CD8-positive, alpha-beta T cell (primary cell): ENCODE measurements at regions of chr19 and their contacts with region 1.

Region 1: GRCh38 chr19:44212250-44212865 is at the start of gene ZNF227:
- DNase-seq: peak; percentile 52 to 88 (median 81)
- ATAC-seq: peak; percentile 96
- H3K4me3 ChIP-seq: peak within 1 kb of the TSS; percentile 79 to 94
- H3K4me3 Mint-ChIP-seq: peak within 1 kb of the TSS; percentile 95
- H3K27ac ChIP-seq: peak within 1 kb of the TSS; percentile 75 to 81
- H3K27ac Mint-ChIP-seq: peak within 1 kb of the TSS; percentile 95
- H3K4me1 ChIP-seq: peaks cover 18% of the 10 kb centered on the region
- H3K4me1 Mint-ChIP-seq: peaks cover 32% of the 10 kb centered on the region
- H3K27me3 ChIP-seq: no peaks in the 10 kb centered on the region
- H3K27me3 Mint-ChIP-seq: no peaks in the 10 kb centered on the region
- CTCF ChIP-seq: no peak
- total RNA-seq, gene ZNF227: 22.6 to 23.0 TPM

Region 2: GRCh38 chr19:43438291-43439096 is 773.9 kb before region 1 on chr19:
- CTCF ChIA-PET with region 1: no interaction called
- POLR2A ChIA-PET with region 1: no interaction called
- intact Hi-C with region 1: no loop called
- DNase-seq: peak in 3 of 9 experiments; percentile 16 to 33 (median 22)
- ATAC-seq: peak; percentile 25
- H3K4me3 ChIP-seq: peak overlapping the region in 1 of 2 experiments; percentile 10
- H3K4me3 Mint-ChIP-seq: peak overlapping the region; percentile 44
- H3K27ac ChIP-seq: peak overlapping the region; percentile 64 to 88
- H3K27ac Mint-ChIP-seq: peak overlapping the region; percentile 96
- H3K4me1 ChIP-seq: peaks cover 33% of the 10 kb centered on the region
- H3K4me1 Mint-ChIP-seq: peaks cover 56% of the 10 kb centered on the region
- H3K27me3 ChIP-seq: no peaks in the 10 kb centered on the region
- H3K27me3 Mint-ChIP-seq: no peaks in the 10 kb centered on the region
- CTCF ChIP-seq: no peak

Region 3: DNA sequence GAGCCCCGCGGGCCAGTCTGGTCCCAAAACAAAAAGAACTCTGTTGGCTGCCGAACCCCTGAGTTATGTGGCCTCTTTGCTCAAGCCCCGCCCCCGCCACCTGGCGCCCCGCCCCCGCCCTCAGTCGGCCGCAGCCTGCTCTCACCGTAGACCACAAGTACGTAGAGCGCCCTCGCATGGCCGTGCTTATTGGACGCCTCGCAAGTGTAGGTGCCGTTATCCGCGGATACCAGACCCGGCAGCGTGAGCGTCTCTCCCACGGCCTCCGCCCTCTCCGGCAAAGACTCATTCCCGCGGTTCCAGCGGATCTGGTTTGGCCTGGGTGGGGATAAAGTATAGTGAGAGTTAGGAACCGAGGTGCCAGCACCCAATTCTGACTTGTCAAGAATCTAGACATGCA is 587.4 kb before region 1 on chr19:
- CTCF ChIA-PET with region 1: no interaction called
- POLR2A ChIA-PET with region 1: no interaction called
- intact Hi-C with region 1: loop called in 1 of 2 experiments (anchors 5 kb)
- DNase-seq: peak; percentile 68 to 93 (median 84)
- ATAC-seq: peak; percentile 89
- H3K4me3 ChIP-seq: no peak overlapping the region
- H3K4me3 Mint-ChIP-seq: no peak overlapping the region
- H3K27ac ChIP-seq: no peak overlapping the region
- H3K27ac Mint-ChIP-seq: no peak overlapping the region
- H3K4me1 ChIP-seq: peaks cover 21% of the 10 kb centered on the region
- H3K4me1 Mint-ChIP-seq: peaks cover 20% of the 10 kb centered on the region
- H3K27me3 ChIP-seq: peaks cover 3 to 4% of the 10 kb centered on the region in 2 experiments
- H3K27me3 Mint-ChIP-seq: peaks cover 9% of the 10 kb centered on the region
- CTCF ChIP-seq: peak; percentile 51

Region 4: DNA sequence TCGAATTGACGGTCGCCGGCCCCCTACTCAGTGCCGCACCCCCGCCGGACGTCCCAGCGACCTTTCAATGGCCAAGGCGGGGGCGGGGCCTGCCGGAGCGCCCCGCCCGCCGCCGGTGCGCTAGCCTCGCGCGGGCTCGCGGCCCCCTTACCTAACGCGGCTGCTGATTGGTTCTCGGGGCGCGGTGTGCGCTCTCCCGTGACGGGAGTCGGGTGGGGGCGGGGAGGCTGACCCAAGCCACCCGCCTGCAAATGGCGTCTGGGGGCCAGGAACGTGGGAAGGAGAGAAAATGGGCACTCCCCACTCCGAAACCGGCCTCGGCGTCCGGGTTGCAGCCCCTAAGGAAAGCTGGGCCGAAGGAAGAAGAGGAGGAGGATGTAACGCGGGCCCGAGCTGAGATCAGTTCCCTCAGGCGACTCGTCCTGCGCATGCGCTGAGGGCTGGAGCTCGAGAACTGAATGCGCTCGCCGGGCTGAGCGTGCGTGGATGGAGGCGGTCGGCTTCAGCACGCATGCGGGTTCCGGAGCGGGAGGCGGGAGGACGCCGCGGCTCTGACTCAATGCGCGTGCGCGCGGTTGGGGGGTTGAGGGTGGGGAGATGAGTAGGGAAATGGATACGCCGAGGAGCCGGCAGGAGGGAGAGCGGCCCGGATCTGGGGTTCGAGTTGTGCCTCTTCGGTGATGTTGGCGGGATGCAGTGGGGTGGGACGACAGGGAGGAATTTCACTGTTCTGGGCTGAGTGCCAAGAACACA is 457.7 kb before region 1 on chr19 and contains the start of gene SMG9:
- CTCF ChIA-PET with region 1: no interaction called
- POLR2A ChIA-PET with region 1: no interaction called
- intact Hi-C with region 1: no loop called
- DNase-seq: peak; percentile 95 to 99 (median 99)
- ATAC-seq: peak; percentile 80
- H3K4me3 ChIP-seq: peak within 1 kb of the TSS; percentile 71 to 72
- H3K4me3 Mint-ChIP-seq: peak within 1 kb of the TSS; percentile 92
- H3K27ac ChIP-seq: peak within 1 kb of the TSS; percentile 85 to 97
- H3K27ac Mint-ChIP-seq: peak within 1 kb of the TSS; percentile 98
- H3K4me1 ChIP-seq: peaks cover 21% of the 10 kb centered on the region
- H3K4me1 Mint-ChIP-seq: peaks cover 46% of the 10 kb centered on the region
- H3K27me3 ChIP-seq: no peaks in the 10 kb centered on the region
- H3K27me3 Mint-ChIP-seq: no peaks in the 10 kb centered on the region
- CTCF ChIP-seq: no peak
- total RNA-seq, gene SMG9: 32.2 to 34.3 TPM

Region 5: DNA sequence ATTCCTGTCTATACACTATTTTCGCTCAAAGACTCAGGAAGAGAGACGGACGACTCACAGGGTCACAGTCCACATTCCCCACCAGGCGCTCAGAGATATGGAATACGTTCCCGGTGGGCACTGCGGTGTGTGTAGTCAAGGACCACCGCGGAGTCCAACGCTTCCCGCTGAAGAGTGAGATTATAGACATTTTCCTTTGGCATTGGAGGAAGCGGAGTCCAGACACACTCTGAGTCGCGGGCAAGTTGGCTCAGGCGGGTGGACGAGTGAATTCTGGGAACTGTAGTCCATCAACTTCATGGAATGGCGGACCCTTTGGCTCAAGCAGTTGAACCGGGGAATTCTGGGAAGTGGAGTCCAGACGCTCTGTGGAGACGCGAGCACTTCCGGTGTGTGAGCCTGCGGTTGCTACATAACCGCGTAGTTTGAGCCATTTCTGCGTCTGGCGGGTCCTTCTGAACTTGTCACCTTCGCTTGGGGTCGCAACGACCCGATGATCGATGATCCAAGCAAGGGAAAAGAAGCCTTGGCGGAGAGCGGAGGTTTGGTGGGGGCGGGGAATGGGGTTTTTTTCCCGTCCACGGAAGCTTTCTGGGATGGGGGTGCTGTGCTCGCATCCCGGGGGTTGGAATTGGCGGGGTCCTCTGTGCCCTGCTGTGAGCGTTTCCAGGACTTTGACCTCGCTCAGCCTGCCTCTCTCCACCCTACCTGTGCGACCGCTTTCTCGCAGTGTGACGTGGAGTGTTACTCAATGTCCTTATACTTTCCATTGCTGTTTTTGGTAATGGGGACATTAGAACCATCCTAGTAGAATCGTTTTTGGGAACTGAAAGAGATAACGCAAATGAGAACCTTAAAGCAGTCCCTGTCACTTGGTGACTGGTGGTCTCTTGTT is 209.5 kb before region 1 on chr19 and contains the start of gene ZNF230:
- CTCF ChIA-PET with region 1: no interaction called
- POLR2A ChIA-PET with region 1: no interaction called
- intact Hi-C with region 1: loop called (anchors 1 to 2 kb)
- DNase-seq: peak; percentile 64 to 96 (median 82)
- ATAC-seq: peak; percentile 96
- H3K4me3 ChIP-seq: peak within 1 kb of the TSS; percentile 91 to 92
- H3K4me3 Mint-ChIP-seq: peak within 1 kb of the TSS; percentile 99
- H3K27ac ChIP-seq: peak within 1 kb of the TSS; percentile 59 to 81
- H3K27ac Mint-ChIP-seq: peak within 1 kb of the TSS; percentile 98
- H3K4me1 ChIP-seq: peaks cover 12% of the 10 kb centered on the region
- H3K4me1 Mint-ChIP-seq: peaks cover 23% of the 10 kb centered on the region
- H3K27me3 ChIP-seq: no peaks in the 10 kb centered on the region
- H3K27me3 Mint-ChIP-seq: no peaks in the 10 kb centered on the region
- CTCF ChIP-seq: no peak
- total RNA-seq, gene ZNF230: 2.4 to 3.8 TPM

Region 6: GRCh38 chr19:44071824-44072542 is 140.4 kb before region 1 on chr19 and contains the start of gene ZNF284:
- CTCF ChIA-PET with region 1: no interaction called
- POLR2A ChIA-PET with region 1: no interaction called
- intact Hi-C with region 1: loop called (anchors 1 kb)
- DNase-seq: peak; percentile 60 to 93 (median 83)
- ATAC-seq: peak; percentile 99
- H3K4me3 ChIP-seq: peak within 1 kb of the TSS; percentile 65 to 73
- H3K4me3 Mint-ChIP-seq: peak within 1 kb of the TSS; percentile 91
- H3K27ac ChIP-seq: peak within 1 kb of the TSS; percentile 2 to 59
- H3K27ac Mint-ChIP-seq: peak within 1 kb of the TSS; percentile 79
- H3K4me1 ChIP-seq: peaks cover 16% of the 10 kb centered on the region
- H3K4me1 Mint-ChIP-seq: peaks cover 36% of the 10 kb centered on the region
- H3K27me3 ChIP-seq: no peaks in the 10 kb centered on the region
- H3K27me3 Mint-ChIP-seq: no peaks in the 10 kb centered on the region
- CTCF ChIP-seq: no peak
- total RNA-seq, gene ZNF284: 0.64 to 1.2 TPM

Region 7: DNA sequence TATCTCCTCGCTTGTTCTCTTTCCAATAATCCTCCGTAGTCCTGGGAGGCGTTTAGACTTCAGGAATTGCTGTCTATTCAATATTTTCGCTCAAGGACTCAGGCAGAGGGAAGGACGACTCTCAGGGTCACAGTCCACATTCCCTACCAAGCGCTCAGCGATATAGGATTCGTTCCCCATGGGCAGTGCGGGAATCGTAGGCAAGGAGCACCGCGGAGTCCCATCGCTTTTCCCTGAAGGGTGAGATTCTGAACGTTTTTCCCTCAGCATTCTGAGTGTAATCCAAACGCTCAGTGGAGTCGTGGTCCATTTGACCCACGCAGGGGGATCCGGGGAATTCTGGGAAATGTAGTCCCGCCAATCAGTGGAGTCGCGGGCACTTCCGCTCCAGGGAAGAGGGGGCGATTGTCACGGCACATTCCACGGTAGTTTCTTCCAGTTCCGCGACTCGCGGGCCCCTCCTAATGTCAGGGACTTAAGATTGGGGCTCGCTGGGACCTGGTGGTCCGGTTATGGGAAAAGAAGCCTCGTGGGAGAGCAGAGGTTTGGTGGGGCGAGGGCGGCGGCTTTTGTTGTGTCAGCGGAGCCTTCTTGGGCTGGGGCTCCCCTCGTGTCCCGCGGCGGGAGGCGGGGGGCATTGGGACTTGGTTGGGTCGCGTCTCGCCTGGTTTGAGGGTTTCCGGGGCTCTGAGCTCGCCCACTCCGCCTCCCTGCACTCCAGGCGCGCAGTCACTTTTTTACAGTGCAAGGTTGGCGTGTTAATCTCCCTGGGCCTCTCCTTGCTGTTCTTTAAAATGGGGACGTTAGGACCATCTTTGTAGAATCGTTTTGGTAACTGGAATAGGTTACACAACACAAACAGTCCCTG is 70.9 kb before region 1 on chr19 and contains the start of gene ZNF234:
- CTCF ChIA-PET with region 1: no interaction called
- POLR2A ChIA-PET with region 1: interaction called, 5 read pairs
- intact Hi-C with region 1: loop called (anchors 1 to 2 kb)
- DNase-seq: peak; percentile 22 to 86 (median 68)
- ATAC-seq: peak; percentile 93
- H3K4me3 ChIP-seq: peak within 1 kb of the TSS; percentile 77 to 82
- H3K4me3 Mint-ChIP-seq: peak within 1 kb of the TSS; percentile 96
- H3K27ac ChIP-seq: peak within 1 kb of the TSS; percentile 34 to 76
- H3K27ac Mint-ChIP-seq: peak within 1 kb of the TSS; percentile 85
- H3K4me1 ChIP-seq: peaks cover 17% of the 10 kb centered on the region
- H3K4me1 Mint-ChIP-seq: peaks cover 25% of the 10 kb centered on the region
- H3K27me3 ChIP-seq: no peaks in the 10 kb centered on the region
- H3K27me3 Mint-ChIP-seq: no peaks in the 10 kb centered on the region
- CTCF ChIP-seq: no peak
- total RNA-seq, gene ZNF234: 2.2 to 2.4 TPM

Region 8: GRCh38 chr19:44304659-44305193 is 92.4 kb after region 1 on chr19 and contains the start of gene ZNF235:
- CTCF ChIA-PET with region 1: interaction called, 3 read pairs
- POLR2A ChIA-PET with region 1: interaction called, 5 read pairs
- intact Hi-C with region 1: loop called (anchors 1 to 2 kb)
- DNase-seq: peak; percentile 22 to 89 (median 70)
- ATAC-seq: peak; percentile 96
- H3K4me3 ChIP-seq: peak within 1 kb of the TSS; percentile 75 to 77
- H3K4me3 Mint-ChIP-seq: peak within 1 kb of the TSS; percentile 94
- H3K27ac ChIP-seq: peak within 1 kb of the TSS; percentile 26 to 52
- H3K27ac Mint-ChIP-seq: peak within 1 kb of the TSS; percentile 85
- H3K4me1 ChIP-seq: peaks cover 15% of the 10 kb centered on the region
- H3K4me1 Mint-ChIP-seq: peaks cover 35% of the 10 kb centered on the region
- H3K27me3 ChIP-seq: no peaks in the 10 kb centered on the region
- H3K27me3 Mint-ChIP-seq: peaks cover 7% of the 10 kb centered on the region
- CTCF ChIP-seq: no peak
- total RNA-seq, gene ZNF235: 2.6 to 3.7 TPM

Region 9: GRCh38 chr19:44500148-44500956 is 288.0 kb after region 1 on chr19 and contains the start of gene ZNF180:
- CTCF ChIA-PET with region 1: no interaction called
- POLR2A ChIA-PET with region 1: interaction called, 3 read pairs
- intact Hi-C with region 1: loop called (anchors 1 to 2 kb)
- DNase-seq: peak; percentile 89 to 98 (median 96)
- ATAC-seq: peak; percentile 96
- H3K4me3 ChIP-seq: peak within 1 kb of the TSS; percentile 86 to 90
- H3K4me3 Mint-ChIP-seq: peak within 1 kb of the TSS; percentile 92
- H3K27ac ChIP-seq: peak within 1 kb of the TSS; percentile 60 to 77
- H3K27ac Mint-ChIP-seq: peak within 1 kb of the TSS; percentile 92
- H3K4me1 ChIP-seq: peaks cover 21% of the 10 kb centered on the region
- H3K4me1 Mint-ChIP-seq: peaks cover 34% of the 10 kb centered on the region
- H3K27me3 ChIP-seq: no peaks in the 10 kb centered on the region
- H3K27me3 Mint-ChIP-seq: peaks cover 10% of the 10 kb centered on the region
- CTCF ChIP-seq: peak; percentile 35
- total RNA-seq, gene ZNF180: 8.5 to 8.8 TPM

Region 10: GRCh38 chr19:44576843-44577565 is 364.6 kb after region 1 on chr19:
- CTCF ChIA-PET with region 1: no interaction called
- POLR2A ChIA-PET with region 1: no interaction called
- intact Hi-C with region 1: no loop called
- DNase-seq: peak in 2 of 9 experiments; percentile 16 to 50
- ATAC-seq: no peak
- H3K4me3 ChIP-seq: no peak overlapping the region
- H3K4me3 Mint-ChIP-seq: no peak overlapping the region
- H3K27ac ChIP-seq: no peak overlapping the region
- H3K27ac Mint-ChIP-seq: no peak overlapping the region
- H3K4me1 ChIP-seq: no peaks in the 10 kb centered on the region
- H3K4me1 Mint-ChIP-seq: no peaks in the 10 kb centered on the region
- H3K27me3 ChIP-seq: no peaks in the 10 kb centered on the region
- H3K27me3 Mint-ChIP-seq: peaks cover 5% of the 10 kb centered on the region
- CTCF ChIP-seq: peak; percentile 24